ENCODE measurements at regions of chr1 and their contacts with region 1.

Region 1: GRCh38 chr1:176206961-176207902 is at the start of gene COP1:
- DNase-seq: peak; percentile 97 to 99 (median 98)
- ATAC-seq: peak; percentile 92
- H3K4me3 ChIP-seq: peak within 1 kb of the TSS; percentile 85
- H3K27ac ChIP-seq: peak within 1 kb of the TSS; percentile 91
- H3K4me1 ChIP-seq: peaks cover 4 to 21% of the 10 kb centered on the region in 2 experiments; a peak in 3 of 5 replicates
- H3K27me3 ChIP-seq: no peaks in the 10 kb centered on the region
- CTCF ChIP-seq: peak in 2 of 3 experiments; percentile 4 to 24; a peak in 2 of 6 replicates
- EP300 ChIP-seq: peak; percentile 29; the same call in 1 of the 2 replicates
- POLR2A ChIP-seq: peak; percentile 98
- RAD21 ChIP-seq: no peak
- polyA plus RNA-seq, gene COP1: 25.8 to 29.5 TPM

Region 2: DNA sequence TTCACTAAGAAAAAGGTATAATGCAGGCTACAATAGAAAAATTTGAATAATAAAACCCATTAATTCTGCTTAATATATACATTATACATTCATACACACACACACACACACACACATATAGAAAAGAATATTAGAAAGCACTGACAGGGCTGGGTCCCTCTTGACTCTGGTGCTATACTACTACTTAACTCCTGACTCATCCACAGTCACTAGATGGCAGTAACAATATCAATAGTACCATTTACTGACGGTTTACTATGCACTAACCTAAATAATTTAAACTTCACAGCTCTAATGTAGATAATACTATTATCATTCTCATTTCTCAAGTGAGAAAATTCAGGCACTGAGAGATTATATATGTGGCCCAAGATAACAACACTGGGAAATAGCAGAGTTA is 87.7 kb before region 1 on chr1:
- CTCF ChIA-PET with region 1: no interaction called
- POLR2A ChIA-PET with region 1: no interaction called
- in situ Hi-C with region 1: no loop called
- intact Hi-C with region 1: loop called (anchors 5 kb)
- DNase-seq: peak in 2 of 4 experiments; percentile 9 to 20
- ATAC-seq: peak; percentile 83
- H3K4me3 ChIP-seq: no peak overlapping the region
- H3K27ac ChIP-seq: no peak overlapping the region
- H3K4me1 ChIP-seq: no peaks in the 10 kb centered on the region
- H3K27me3 ChIP-seq: no peaks in the 10 kb centered on the region
- CTCF ChIP-seq: peak in 1 of 3 experiments; percentile 24; a peak in 1 of 6 replicates
- EP300 ChIP-seq: no peak
- POLR2A ChIP-seq: no peak
- RAD21 ChIP-seq: peak in 1 of 2 experiments; percentile 30; a peak in 1 of 4 replicates

Region 3: DNA sequence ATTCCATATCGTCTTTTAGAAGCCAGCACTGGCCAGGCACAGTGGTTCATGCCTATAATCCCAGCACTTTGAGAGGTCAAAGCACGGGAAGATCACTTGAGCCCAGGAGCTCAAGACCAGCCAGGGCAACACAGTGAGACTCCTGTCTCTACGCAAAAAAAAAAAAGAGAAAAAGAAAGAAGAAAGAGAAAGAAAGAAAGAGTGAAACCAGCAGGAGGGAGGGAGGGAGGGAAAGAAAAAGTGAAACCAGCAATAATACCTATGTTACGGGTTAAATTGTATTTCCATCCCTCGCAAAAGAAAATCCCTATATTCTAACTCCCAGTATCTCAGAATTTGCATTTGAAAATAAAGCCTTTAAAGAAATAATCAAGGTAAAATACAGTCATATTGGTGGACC is 10.5 kb before region 1 on chr1:
- CTCF ChIA-PET with region 1: no interaction called
- POLR2A ChIA-PET with region 1: interaction called, 20 read pairs
- in situ Hi-C with region 1: no loop called
- intact Hi-C with region 1: no loop called
- DNase-seq: no peak
- ATAC-seq: peak; percentile 14; the same call in 1 of the 3 replicates
- H3K4me3 ChIP-seq: no peak overlapping the region
- H3K27ac ChIP-seq: no peak overlapping the region
- H3K4me1 ChIP-seq: no peaks in the 10 kb centered on the region
- H3K27me3 ChIP-seq: no peaks in the 10 kb centered on the region
- CTCF ChIP-seq: no peak
- EP300 ChIP-seq: no peak
- POLR2A ChIP-seq: no peak
- RAD21 ChIP-seq: no peak

Region 4: DNA sequence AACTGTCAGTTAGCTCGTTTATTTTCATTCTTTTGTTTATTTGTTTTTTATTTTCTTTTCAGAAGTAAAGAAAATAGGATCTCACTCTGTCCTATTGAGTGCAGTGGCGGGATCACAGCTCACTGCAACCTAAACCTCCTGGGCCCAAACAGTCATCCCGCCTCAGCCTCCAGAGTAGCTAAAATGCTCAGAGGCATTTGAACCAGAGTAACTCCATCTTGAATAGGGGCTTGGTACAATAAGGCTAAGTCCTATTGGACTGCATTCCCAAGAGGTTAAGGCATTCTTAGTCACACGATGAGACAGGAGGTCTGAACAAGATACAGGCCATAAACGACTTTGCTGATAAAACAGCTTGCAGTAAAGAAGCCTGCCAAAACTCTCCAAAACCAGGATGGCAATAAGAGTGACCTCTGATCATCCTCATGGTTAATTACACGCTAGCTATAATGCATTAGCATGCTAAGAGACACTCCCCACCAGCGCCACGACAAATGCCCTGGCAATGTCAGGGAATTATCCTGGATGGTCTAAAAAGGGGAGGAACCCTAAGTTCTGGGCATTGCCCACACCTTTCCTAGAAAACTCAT is 13.0 kb after region 1 on chr1:
- CTCF ChIA-PET with region 1: interaction called, 3 read pairs
- POLR2A ChIA-PET with region 1: interaction called, 12 read pairs
- in situ Hi-C with region 1: no loop called
- intact Hi-C with region 1: no loop called
- DNase-seq: no peak
- ATAC-seq: no peak
- H3K4me3 ChIP-seq: no peak overlapping the region
- H3K27ac ChIP-seq: no peak overlapping the region
- H3K4me1 ChIP-seq: no peaks in the 10 kb centered on the region
- H3K27me3 ChIP-seq: 0 out of 5 replicates have a peak, but pooled peaks cover 0 to 2% of the 10 kb centered on the region in 2 experiments
- CTCF ChIP-seq: no peak
- EP300 ChIP-seq: no peak
- POLR2A ChIP-seq: no peak
- RAD21 ChIP-seq: no peak

Measured in K562 (cell line).